ENCODE measurements at regions of chr2 and their contacts with region 1.

Region 1: DNA sequence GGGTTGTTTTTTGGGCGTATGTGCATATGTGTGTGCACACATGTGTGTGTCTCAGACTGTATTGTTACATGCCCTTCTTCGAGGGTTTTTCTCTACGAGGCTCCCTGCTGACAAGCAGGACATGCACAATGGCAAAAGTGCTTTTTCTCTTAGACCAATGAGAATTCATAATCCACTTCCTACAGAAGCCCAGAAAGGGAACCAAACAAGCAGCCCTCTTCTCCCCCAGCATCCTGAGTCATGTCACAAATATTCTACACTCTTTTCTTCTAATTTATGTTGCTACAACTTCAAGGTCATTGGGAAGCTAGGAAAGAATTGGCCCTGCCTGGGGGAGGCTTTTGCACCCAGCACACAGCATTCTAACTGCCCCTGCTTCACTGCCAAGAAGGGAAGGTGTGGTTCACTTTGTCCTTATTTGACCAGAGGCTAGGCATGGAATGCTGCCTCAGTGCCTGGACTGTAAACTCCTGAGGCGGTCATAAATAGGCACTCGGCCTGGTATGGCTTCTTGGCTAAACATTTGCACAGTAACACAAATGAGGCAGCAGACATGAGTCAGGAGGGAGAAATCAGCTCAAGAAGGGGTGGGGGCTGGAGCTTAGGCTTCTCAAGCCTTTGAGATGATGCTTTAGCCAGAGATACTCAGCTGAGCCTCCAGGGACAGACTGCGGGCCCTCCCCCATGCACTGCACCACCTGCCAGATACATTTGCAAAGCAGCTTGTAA is 92.7 kb upstream of the KLF7 start:
- DNase-seq: peak; percentile 89

Region 2: GRCh38 chr2:207133820-207134519 is 124.5 kb before region 1 on chr2:
- intact Hi-C with region 1: no loop called
- DNase-seq: peak; percentile 87

Region 3: GRCh38 chr2:207334624-207335371 is 76.4 kb after region 1 on chr2:
- intact Hi-C with region 1: loop called in 1 of 2 experiments (anchors 10 kb)
- DNase-seq: peak; percentile 93

Region 4: DNA sequence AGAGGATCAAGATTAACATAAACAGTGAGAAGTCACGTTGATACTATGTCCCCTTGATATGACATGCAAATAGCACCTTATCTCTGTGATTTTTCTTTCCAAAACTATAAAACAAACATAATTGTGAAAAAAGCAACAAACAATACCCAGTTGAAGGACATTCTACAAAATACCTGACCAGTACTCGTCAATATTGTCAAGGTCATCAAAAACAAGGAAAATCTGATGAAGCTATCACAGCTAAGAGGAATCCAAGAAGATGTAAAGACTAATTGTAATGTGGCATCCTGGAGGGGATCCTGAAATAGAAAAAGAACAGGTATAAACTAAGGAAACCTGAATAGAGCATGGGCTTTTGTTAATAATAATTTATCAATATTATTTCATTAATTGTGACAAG is 1843.9 kb after region 1 on chr2:
- intact Hi-C with region 1: no loop called
- DNase-seq: no peak

Measured in posterior vena cava (tissue), 2 donors.